MCF 10A (cell line): ENCODE measurements at regions of chr9 and their contacts with region 1.

Region 1: GRCh38 chr9:90972057-90972456 is 170.4 kb downstream of the SYK start:
- DNase-seq: no peak
- H3K4me3 Mint-ChIP-seq: no peak overlapping the region
- H3K27ac Mint-ChIP-seq: peak overlapping the region; percentile 46
- H3K4me1 Mint-ChIP-seq: peaks cover 34% of the 10 kb centered on the region
- H3K27me3 Mint-ChIP-seq: no peaks in the 10 kb centered on the region
- CTCF ChIP-seq: no peak

Region 2: DNA sequence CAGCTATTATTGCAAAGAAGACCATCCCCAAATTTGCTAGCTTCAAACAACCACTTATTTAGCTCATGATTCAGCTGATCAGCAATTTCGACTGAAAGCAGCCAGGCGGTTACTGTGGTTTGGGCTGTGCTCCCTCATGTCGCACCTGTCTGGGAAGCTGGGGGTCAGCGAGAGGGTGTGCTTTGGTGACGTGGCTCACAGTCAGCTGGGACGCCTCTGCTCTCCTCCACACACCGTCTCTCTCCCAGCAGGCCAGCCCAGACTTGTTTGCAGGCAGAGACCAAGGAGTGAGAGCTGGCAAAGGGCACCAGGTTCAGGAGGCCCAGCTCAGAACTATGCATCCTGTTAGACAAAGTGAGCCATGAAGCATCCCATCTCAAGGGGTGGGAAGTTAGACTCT is 29.5 kb before region 1 on chr9:
- CTCF ChIA-PET with region 1: interaction called, 5 read pairs
- POLR2A ChIA-PET with region 1: interaction called, 23 read pairs
- intact Hi-C with region 1: no loop called
- DNase-seq: peak; percentile 93
- H3K4me3 Mint-ChIP-seq: no peak overlapping the region
- H3K27ac Mint-ChIP-seq: peak overlapping the region; percentile 24
- H3K4me1 Mint-ChIP-seq: peaks cover 22% of the 10 kb centered on the region
- H3K27me3 Mint-ChIP-seq: no peaks in the 10 kb centered on the region
- CTCF ChIP-seq: no peak

Region 3: DNA sequence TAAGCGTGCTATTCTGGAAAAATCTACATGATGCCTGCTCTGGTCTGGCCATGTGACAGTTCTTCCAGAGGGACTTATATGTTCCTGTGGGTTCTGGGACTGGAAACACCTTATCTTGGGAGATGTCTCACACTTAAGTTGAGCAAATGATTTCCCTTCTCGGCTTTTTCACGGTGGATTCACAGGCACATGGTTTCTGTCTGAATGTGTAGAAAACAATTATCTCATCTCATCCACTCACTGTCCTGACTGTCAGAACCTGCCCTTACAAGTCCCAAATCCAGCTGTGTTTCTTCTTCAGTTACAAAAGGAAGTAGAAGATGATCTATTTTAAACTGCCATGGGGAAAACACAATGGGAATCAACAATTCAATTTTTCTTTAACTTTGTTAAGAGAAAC is 13.6 kb after region 1 on chr9:
- CTCF ChIA-PET with region 1: interaction called, 5 read pairs
- POLR2A ChIA-PET with region 1: interaction called, 29 read pairs
- intact Hi-C with region 1: no loop called
- DNase-seq: no peak
- H3K4me3 Mint-ChIP-seq: no peak overlapping the region
- H3K27ac Mint-ChIP-seq: peak overlapping the region; percentile 89
- H3K4me1 Mint-ChIP-seq: peaks cover 38% of the 10 kb centered on the region
- H3K27me3 Mint-ChIP-seq: no peaks in the 10 kb centered on the region
- CTCF ChIP-seq: no peak

Region 4: GRCh38 chr9:90991953-90992352 is 19.9 kb after region 1 on chr9:
- CTCF ChIA-PET with region 1: interaction called, 3 read pairs
- POLR2A ChIA-PET with region 1: interaction called, 29 read pairs
- intact Hi-C with region 1: no loop called
- DNase-seq: peak; percentile 39
- H3K4me3 Mint-ChIP-seq: no peak overlapping the region
- H3K27ac Mint-ChIP-seq: peak overlapping the region; percentile 59
- H3K4me1 Mint-ChIP-seq: peaks cover 56% of the 10 kb centered on the region
- H3K27me3 Mint-ChIP-seq: no peaks in the 10 kb centered on the region
- CTCF ChIP-seq: no peak

Region 5: DNA sequence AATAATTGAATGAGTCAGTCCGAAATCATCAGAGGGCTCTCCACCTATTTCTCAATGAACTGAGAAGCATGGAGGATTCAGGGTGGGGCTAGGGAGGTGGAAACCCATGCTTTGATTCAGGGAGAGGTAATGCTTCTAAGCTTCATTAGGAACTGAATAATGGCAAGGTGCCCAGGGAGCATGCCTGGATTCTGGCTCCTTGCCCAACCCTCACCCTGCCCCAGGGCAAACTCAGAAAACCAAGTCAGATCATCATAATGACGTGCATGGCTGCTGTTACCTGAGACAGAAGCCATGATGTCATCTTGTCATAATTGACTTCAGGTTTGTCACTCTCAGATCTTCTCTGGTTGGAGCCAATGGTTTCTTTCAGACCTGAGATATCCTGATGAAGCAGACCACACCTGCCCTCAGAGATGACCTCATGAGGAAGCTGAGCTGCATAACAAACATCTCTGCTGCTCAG is 29.1 kb after region 1 on chr9:
- CTCF ChIA-PET with region 1: interaction called, 4 read pairs
- POLR2A ChIA-PET with region 1: interaction called, 20 read pairs
- intact Hi-C with region 1: no loop called
- DNase-seq: peak; percentile 99
- H3K4me3 Mint-ChIP-seq: no peak overlapping the region
- H3K27ac Mint-ChIP-seq: peak overlapping the region; percentile 88
- H3K4me1 Mint-ChIP-seq: peaks cover 36% of the 10 kb centered on the region
- H3K27me3 Mint-ChIP-seq: no peaks in the 10 kb centered on the region
- CTCF ChIP-seq: no peak